Aorta (tissue), 5 donors: ENCODE measurements at regions of chr4 and their contacts with region 1.

Region 1: DNA sequence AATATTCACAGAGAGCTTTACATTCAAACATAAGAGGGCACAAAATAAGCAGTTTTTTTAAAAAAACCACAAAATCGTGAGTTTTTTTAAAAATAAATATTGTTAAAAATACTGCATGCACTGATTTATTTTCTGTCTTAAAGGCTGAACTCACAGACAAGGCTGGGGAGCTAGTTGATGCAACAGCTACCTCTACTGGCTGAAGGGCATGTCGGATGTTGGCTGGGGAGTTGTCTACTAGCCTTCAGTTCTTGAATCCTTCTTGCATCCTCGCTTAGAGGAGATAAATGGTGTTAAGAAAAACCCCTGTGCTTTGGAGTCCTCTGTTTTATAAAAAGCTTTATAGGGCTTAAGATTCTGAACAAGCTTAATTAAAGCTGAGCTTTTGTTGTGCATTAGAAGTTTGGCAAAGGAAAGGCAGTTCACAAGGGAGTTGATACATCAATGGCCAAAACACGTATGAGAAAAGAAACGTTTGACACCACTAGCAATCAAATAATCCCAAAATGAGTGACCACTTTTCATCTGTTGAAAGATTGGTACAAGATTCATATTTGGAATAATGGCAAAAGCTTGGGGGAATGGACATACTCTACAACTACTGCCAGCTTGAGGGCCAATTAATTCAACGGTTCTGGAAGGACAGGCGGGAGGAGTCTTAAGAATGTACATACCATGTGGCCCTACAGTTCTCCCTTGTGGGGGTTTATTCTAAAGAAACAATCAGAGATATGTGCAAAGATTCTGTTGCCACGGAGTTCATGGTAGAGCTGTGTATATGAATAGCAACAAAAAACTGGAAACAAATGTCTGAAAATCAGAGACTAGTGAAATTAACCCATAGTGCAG is 94.7 kb downstream of the SEL1L3 start:
- DNase-seq: peak in 1 of 2 donors; percentile 56
- ATAC-seq: no peak
- H3K4me3 ChIP-seq: no peak overlapping the region
- H3K27ac ChIP-seq: no peak overlapping the region
- H3K4me1 ChIP-seq: no peaks in the 10 kb centered on the region
- H3K27me3 ChIP-seq: peaks cover 0 to 2% of the 10 kb centered on the region in 2 donors

Region 2: GRCh38 chr4:25439918-25440477 is 328.1 kb before region 1 on chr4:
- intact Hi-C with region 1: loop called (anchors 2 to 5 kb)
- DNase-seq: no peak
- ATAC-seq: peak; percentile 84
- H3K4me3 ChIP-seq: no peak overlapping the region
- H3K27ac ChIP-seq: no peak overlapping the region
- H3K4me1 ChIP-seq: no peaks in the 10 kb centered on the region
- H3K27me3 ChIP-seq: no peaks in the 10 kb centered on the region

Region 3: DNA sequence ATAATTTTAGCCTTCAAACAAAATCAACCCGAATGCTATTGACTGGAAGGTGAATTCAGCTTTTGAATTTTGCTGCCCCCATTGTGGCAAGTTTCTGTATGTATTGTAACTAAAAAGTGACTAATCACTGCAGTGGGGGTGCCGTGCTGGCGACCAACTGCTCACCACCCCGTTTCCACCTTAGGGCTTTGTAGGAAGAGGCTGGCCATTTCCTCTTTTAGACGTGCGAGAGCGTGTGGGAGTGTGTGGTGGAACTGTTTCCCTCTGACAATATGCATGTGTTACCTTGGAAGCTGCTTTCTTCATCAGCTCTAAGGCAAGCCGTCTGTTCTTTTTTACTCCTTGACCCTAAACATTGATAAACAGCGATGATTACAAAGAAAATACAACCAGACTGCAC is 15.8 kb after region 1 on chr4:
- intact Hi-C with region 1: no loop called
- DNase-seq: no peak
- ATAC-seq: no peak
- H3K4me3 ChIP-seq: no peak overlapping the region
- H3K27ac ChIP-seq: no peak overlapping the region
- H3K4me1 ChIP-seq: no peaks in the 10 kb centered on the region
- H3K27me3 ChIP-seq: no peaks in the 10 kb centered on the region